ENCODE measurements at regions of chr11 and their contacts with region 1.

Region 1: GRCh38 chr11:6022956-6023355 is 7.6 kb downstream of the OR56A1 start:
- DNase-seq: peak in 1 of 6 donors; percentile 36
- ATAC-seq: peak; percentile 70 to 90 (median 88)
- H3K4me3 ChIP-seq: no peak overlapping the region
- H3K27ac ChIP-seq: no peak overlapping the region
- H3K4me1 ChIP-seq: no peaks in the 10 kb centered on the region
- H3K27me3 ChIP-seq: no peaks in the 10 kb centered on the region
- CTCF ChIP-seq: peak in 3 of 4 donors; percentile 19 to 34 (median 23)

Region 2: DNA sequence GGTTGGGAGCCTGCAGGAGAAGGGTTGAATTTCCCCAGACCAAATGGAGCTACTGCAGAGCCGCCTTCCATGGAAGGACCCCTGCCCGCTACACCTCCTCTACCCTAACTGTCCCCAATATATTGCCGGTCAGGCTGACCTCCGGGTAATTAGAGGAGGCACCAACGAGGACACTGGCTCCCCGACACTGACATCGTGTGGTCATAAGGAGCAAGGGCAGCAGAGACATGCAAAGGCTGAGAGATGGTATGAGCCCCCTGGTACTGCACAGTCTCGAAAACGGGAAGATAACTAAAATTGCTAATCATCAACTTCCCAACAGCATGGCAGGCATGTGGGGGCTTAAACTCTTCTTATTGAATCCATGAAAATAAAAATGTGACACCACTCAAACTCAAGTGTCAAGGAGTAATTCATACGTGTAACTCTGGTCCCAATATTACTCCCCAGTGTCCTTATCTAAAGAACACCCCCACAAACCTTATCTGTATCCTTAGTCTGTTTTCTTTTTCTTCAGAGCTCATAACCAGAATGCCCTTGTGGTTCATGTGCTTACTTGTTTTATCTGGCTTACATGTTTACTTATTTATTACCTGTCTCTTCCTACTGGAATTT is 293.0 kb after region 1 on chr11:
- intact Hi-C with region 1: loop called in 1 of 3 experiments (anchors 10 kb)
- DNase-seq: peak; percentile 39 to 76 (median 56)
- ATAC-seq: peak in 3 of 4 donors; percentile 48 to 57 (median 56)
- H3K4me3 ChIP-seq: peak overlapping the region in 1 of 4 donors; percentile 2
- H3K27ac ChIP-seq: no peak overlapping the region
- H3K4me1 ChIP-seq: peaks cover 3 to 15% (median 6%) of the 10 kb centered on the region in 3 donors
- H3K27me3 ChIP-seq: no peaks in the 10 kb centered on the region
- CTCF ChIP-seq: peak; percentile 62 to 82 (median 76)

Region 3: GRCh38 chr11:6353367-6353987 is 330.5 kb after region 1 on chr11:
- intact Hi-C with region 1: loop called in 2 of 3 experiments (anchors 10 kb)
- DNase-seq: peak; percentile 59 to 78 (median 70)
- ATAC-seq: peak; percentile 72 to 92 (median 88)
- H3K4me3 ChIP-seq: no peak overlapping the region
- H3K27ac ChIP-seq: peak overlapping the region in 1 of 4 donors; percentile 77
- H3K4me1 ChIP-seq: peaks cover 6 to 29% (median 19%) of the 10 kb centered on the region in 3 donors
- H3K27me3 ChIP-seq: no peaks in the 10 kb centered on the region
- CTCF ChIP-seq: peak; percentile 89 to 97 (median 96)